BJ (cell line): ENCODE measurements at regions of chr7 and their contacts with region 1.

Region 1: DNA sequence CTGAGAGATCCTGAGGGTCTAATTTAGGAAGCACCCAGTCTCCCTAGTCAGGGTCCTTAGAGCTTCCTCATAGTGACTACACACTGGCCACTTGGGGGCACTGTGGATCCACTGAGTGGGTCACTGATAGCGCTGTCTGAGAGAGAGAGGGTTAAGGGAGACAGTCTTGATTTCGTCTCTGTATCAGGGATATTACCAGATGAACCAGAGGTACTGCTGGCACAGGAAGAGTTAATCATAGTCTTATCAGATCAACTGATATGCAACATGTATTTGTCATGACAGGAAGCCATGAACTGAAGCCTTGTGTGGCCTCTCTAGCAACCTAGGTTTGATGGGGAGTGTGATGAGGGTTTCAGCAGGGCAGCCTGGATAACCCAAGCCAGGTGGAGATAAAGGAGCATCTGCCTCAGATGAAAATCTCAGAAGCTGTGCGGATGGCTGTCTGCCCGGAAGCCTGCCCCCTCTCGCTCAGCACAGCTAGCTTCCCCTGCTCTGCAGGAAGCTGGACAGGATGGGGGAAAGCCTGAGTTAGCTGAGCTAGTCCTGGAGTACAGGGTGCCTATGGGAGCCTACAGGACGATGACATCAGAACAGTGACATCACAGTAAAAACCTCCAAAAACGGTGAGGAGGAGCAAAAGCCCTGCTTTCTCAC is 214.0 kb upstream of the PRSS1 start:
- DNase-seq: peak; percentile 42
- H3K4me3 ChIP-seq: no peak overlapping the region
- H3K27me3 ChIP-seq: no peaks in the 10 kb centered on the region
- CTCF ChIP-seq: peak; percentile 87

Region 2: DNA sequence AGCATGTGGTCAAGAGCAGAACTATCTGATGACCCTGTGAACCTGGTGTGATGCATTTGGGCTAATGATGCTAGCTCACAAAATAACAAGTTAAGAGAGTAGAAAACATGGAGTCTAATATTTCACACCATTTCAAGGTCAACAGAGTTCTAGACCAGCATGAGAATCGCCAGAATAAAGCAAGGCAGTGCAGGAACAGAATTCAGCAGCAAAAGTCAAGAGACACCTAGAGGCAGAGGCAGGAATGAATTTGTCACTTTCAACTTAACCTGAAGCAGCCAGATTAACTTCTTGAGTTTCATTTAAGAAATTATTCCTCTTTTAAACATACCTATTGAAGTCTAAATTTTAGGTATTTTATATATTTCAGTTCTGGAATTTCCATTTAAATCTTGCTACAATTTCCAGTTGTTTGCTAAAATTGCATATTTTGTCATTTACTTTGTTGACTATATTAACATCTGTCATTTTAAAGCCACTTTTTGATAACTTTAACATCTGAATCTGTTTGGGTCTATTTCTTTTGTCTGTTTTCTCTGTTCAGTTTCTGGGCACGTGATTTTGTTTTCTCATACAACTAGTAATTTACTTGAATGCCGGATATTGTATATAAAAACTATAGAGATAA is 233.2 kb before region 1 on chr7:
- CTCF ChIA-PET with region 1: no interaction called
- POLR2A ChIA-PET with region 1: no interaction called
- DNase-seq: no peak
- H3K4me3 ChIP-seq: no peak overlapping the region
- H3K27me3 ChIP-seq: no peaks in the 10 kb centered on the region
- CTCF ChIP-seq: 0 out of 2 replicates have a peak, but pooled peaks have one; percentile 20

Region 3: DNA sequence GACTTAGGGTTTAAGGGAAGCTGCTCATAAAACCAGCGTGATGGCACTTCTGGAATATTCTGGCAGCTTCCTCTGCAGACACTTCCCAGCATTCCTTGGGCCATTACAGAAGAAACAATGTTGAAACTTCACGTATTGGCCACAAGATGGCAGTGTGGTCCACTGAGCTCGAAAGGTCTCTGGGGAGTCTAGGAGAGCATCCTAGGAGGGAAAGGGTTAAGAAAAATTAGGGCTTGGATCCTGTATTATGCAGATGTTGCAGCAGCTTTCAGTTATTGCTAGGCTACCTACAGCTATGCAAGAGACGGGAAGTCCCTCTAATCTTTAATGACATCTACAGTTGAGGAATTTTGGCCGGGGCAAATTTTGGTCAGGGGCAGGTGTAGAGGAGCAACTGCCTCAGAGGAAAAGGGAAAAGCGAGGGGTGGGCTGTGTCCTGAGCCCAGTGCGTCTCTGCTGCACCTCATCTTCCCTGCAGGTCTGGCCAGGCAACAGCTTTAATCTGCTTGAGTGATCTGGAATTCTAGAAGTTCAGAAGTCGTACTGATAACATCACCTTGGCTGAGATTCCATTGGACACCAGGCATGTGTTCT is 56.7 kb before region 1 on chr7:
- CTCF ChIA-PET with region 1: interaction called, 18 read pairs
- POLR2A ChIA-PET with region 1: no interaction called
- DNase-seq: no peak
- H3K4me3 ChIP-seq: no peak overlapping the region
- H3K27me3 ChIP-seq: no peaks in the 10 kb centered on the region
- CTCF ChIP-seq: peak; percentile 74

Region 4: GRCh38 chr7:142523821-142524460 is 11.3 kb before region 1 on chr7:
- CTCF ChIA-PET with region 1: interaction called, 55 read pairs
- POLR2A ChIA-PET with region 1: no interaction called
- DNase-seq: no peak
- H3K4me3 ChIP-seq: no peak overlapping the region
- H3K27me3 ChIP-seq: peaks cover 11% of the 10 kb centered on the region
- CTCF ChIP-seq: peak; percentile 28

Region 5: GRCh38 chr7:142568435-142569097 is 33.3 kb after region 1 on chr7:
- CTCF ChIA-PET with region 1: interaction called, 22 read pairs
- POLR2A ChIA-PET with region 1: interaction called, 3 read pairs
- DNase-seq: peak; percentile 67
- H3K4me3 ChIP-seq: no peak overlapping the region
- H3K27me3 ChIP-seq: no peaks in the 10 kb centered on the region
- CTCF ChIP-seq: no peak

Region 6: GRCh38 chr7:142612237-142612881 is 77.1 kb after region 1 on chr7:
- CTCF ChIA-PET with region 1: interaction called, 14 read pairs
- POLR2A ChIA-PET with region 1: no interaction called
- DNase-seq: no peak
- H3K4me3 ChIP-seq: no peak overlapping the region
- H3K27me3 ChIP-seq: no peaks in the 10 kb centered on the region
- CTCF ChIP-seq: no peak

Region 7: GRCh38 chr7:142782922-142783900 is 248.0 kb after region 1 on chr7:
- CTCF ChIA-PET with region 1: interaction called, 128 read pairs
- POLR2A ChIA-PET with region 1: no interaction called
- DNase-seq: peak; percentile 27
- H3K4me3 ChIP-seq: peak overlapping the region; percentile 42
- H3K27me3 ChIP-seq: no peaks in the 10 kb centered on the region; the same call in none of the 2 replicates
- CTCF ChIP-seq: peak; percentile 93